CD4-positive, alpha-beta T cell (primary cell): ENCODE measurements at regions of chr15 and their contacts with region 1.

Region 1: DNA sequence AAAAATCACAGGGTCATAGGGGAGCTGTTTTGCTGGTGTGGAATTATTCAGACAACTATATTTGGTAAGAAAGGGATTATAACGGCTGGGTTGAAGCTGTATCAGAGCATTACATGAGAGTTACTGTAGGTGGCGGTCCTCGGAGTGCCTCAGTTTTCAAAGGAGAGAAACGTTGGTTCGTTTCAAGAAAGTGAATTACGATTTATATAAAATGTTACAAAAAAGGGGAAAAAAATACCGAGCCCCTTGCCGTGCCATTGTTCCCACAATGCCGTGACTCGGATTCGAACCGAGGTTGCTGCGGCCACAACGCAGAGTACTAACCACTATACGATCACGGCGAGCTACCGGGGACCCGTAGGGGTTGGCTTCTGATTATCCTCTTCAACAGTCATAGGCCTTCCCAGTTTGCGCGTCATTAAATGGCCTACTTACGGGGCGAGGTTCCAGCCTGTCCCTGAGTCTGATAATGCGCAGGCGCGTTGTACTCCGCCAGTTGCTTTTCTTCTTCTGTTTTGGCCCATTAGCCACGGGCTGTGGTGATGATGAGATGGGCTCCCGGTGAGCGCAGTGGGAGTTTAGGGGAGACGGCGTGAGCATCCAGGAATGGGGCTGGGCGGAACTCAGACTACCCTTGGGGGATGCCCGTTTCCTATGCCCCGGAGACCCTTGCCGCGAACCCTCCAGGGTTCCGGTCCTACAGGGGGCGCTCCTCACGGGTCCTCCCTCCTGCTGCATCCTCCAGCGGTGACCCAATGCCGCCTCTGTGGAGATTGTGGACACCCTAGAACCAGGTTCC is 10.8 kb upstream of the SHF start:
- DNase-seq: peak; percentile 84 to 99 (median 94)
- ATAC-seq: peak; percentile 61
- H3K4me3 ChIP-seq: peak overlapping the region; percentile 88
- H3K4me3 Mint-ChIP-seq: no peak overlapping the region
- H3K27ac ChIP-seq: peak overlapping the region; percentile 91 to 94
- H3K27ac Mint-ChIP-seq: no peak overlapping the region
- H3K4me1 ChIP-seq: peaks cover 36% of the 10 kb centered on the region
- H3K4me1 Mint-ChIP-seq: no peaks in the 10 kb centered on the region
- H3K27me3 ChIP-seq: no peaks in the 10 kb centered on the region
- H3K27me3 Mint-ChIP-seq: peaks cover 16% of the 10 kb centered on the region
- CTCF ChIP-seq: peak; percentile 46

Region 2: DNA sequence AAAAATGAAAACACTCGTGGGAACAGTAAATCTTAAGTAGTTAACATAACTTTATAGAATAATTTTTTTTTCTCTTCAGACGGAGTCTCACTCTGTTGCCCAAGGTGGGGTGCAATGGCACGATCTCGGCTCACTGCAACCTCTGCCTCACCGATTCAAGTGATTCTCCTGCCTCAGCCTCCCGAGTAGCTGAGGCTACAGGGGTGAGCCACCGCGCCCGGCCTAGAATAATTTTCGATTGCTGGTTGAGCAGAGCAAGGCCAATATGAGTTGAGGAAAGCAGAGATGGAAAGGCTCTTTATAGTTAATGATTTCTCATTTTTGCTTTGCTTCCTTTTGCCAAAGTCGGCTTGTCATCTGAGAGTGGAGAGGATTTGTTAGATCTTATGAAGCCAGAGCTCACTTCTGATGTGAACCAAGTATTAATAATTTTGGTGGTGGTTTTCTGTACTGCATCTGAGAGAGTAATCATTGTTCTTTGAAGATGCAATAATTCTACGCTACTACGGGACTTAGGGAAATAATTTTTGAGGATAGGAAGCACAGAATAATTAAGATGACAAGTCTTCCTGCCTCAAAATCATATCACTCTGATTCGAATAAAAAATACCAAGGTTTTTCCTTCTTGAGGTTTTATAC is 911.6 kb before region 1 on chr15:
- CTCF ChIA-PET with region 1: no interaction called
- POLR2A ChIA-PET with region 1: interaction called, 4 read pairs
- intact Hi-C with region 1: loop called in 1 of 2 experiments (anchors 10 kb)
- DNase-seq: peak in 2 of 14 experiments; percentile 23 to 32
- ATAC-seq: no peak
- H3K4me3 ChIP-seq: peak overlapping the region; percentile 78
- H3K4me3 Mint-ChIP-seq: peak overlapping the region; percentile 98
- H3K27ac ChIP-seq: peak overlapping the region; percentile 95
- H3K27ac Mint-ChIP-seq: peak overlapping the region; percentile 99
- H3K4me1 ChIP-seq: peaks cover 16% of the 10 kb centered on the region
- H3K4me1 Mint-ChIP-seq: peaks cover 51% of the 10 kb centered on the region
- H3K27me3 ChIP-seq: no peaks in the 10 kb centered on the region
- H3K27me3 Mint-ChIP-seq: peaks cover 8% of the 10 kb centered on the region
- CTCF ChIP-seq: peak; percentile 27

Region 3: GRCh38 chr15:44482088-44482487 is 716.4 kb before region 1 on chr15:
- CTCF ChIA-PET with region 1: no interaction called
- POLR2A ChIA-PET with region 1: no interaction called
- intact Hi-C with region 1: no loop called
- DNase-seq: no peak
- ATAC-seq: no peak
- H3K4me3 ChIP-seq: no peak overlapping the region
- H3K4me3 Mint-ChIP-seq: no peak overlapping the region
- H3K27ac ChIP-seq: no peak overlapping the region
- H3K27ac Mint-ChIP-seq: peak overlapping the region; percentile 2
- H3K4me1 ChIP-seq: peaks cover 3% of the 10 kb centered on the region
- H3K4me1 Mint-ChIP-seq: peaks cover 25% of the 10 kb centered on the region
- H3K27me3 ChIP-seq: no peaks in the 10 kb centered on the region
- H3K27me3 Mint-ChIP-seq: no peaks in the 10 kb centered on the region
- CTCF ChIP-seq: no peak

Region 4: DNA sequence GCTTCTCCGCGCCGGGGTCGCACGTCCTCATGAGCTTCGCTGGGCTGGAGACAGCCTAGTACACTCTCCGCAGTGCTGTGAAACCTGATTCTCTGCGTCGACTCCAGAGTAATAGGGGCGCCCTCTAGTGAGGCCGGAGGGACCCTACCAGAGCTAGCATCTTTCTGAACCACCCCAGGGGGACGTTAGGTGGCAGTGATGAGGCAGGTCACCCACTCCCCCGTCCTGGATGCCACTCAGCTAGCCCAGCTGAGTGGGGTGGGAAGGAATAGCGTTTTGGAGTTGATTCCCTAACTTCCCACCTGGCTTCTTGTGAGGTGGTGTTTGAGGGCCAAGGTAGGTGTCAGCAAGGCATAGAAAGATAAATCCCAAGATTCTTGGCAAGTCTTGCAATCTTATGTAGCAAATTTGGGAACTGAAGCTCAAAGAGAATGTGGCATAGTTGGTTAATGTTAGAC is 80.4 kb before region 1 on chr15:
- CTCF ChIA-PET with region 1: interaction called, 13 read pairs
- POLR2A ChIA-PET with region 1: interaction called, 10 read pairs
- intact Hi-C with region 1: loop called in 1 of 2 experiments (anchors 5 kb)
- DNase-seq: peak; percentile 70 to 91 (median 80)
- ATAC-seq: peak; percentile 99
- H3K4me3 ChIP-seq: peak overlapping the region; percentile 29
- H3K4me3 Mint-ChIP-seq: peak overlapping the region; percentile 88
- H3K27ac ChIP-seq: no peak overlapping the region
- H3K27ac Mint-ChIP-seq: no peak overlapping the region
- H3K4me1 ChIP-seq: peaks cover 39% of the 10 kb centered on the region
- H3K4me1 Mint-ChIP-seq: peaks cover 43% of the 10 kb centered on the region
- H3K27me3 ChIP-seq: peaks cover 58 to 59% of the 10 kb centered on the region in 2 experiments
- H3K27me3 Mint-ChIP-seq: peaks cover 80% of the 10 kb centered on the region
- CTCF ChIP-seq: peak; percentile 100

Region 5: GRCh38 chr15:45179221-45179985 is 19.1 kb before region 1 on chr15:
- CTCF ChIA-PET with region 1: interaction called, 5 read pairs
- POLR2A ChIA-PET with region 1: interaction called, 129 read pairs
- intact Hi-C with region 1: no loop called
- DNase-seq: peak in 11 of 14 experiments; percentile 31 to 79 (median 50)
- ATAC-seq: peak; percentile 51
- H3K4me3 ChIP-seq: no peak overlapping the region
- H3K4me3 Mint-ChIP-seq: no peak overlapping the region
- H3K27ac ChIP-seq: no peak overlapping the region
- H3K27ac Mint-ChIP-seq: no peak overlapping the region
- H3K4me1 ChIP-seq: peaks cover 15% of the 10 kb centered on the region
- H3K4me1 Mint-ChIP-seq: peaks cover 7% of the 10 kb centered on the region
- H3K27me3 ChIP-seq: no peaks in the 10 kb centered on the region
- H3K27me3 Mint-ChIP-seq: no peaks in the 10 kb centered on the region
- CTCF ChIP-seq: peak; percentile 42

Region 6: DNA sequence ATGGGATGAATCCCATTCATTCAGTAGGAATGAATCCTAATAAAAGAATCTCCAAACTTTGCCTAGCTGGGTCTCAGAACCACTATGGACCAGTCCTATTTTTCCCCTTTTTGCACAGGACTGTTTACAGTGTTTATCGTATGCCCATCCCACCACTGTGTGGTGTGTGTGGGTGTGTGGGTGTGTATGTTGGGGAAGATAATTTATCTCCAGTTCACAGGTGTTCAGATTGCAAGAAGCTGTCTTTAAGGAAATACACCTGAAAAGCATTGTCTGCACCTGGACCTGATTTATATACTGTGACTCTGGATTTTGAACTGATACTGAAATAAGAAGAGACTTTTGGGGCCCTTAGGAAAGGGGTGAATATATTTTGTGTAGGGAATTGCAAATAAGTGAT is 14.0 kb after region 1 on chr15:
- CTCF ChIA-PET with region 1: no interaction called
- POLR2A ChIA-PET with region 1: interaction called, 10 read pairs
- intact Hi-C with region 1: no loop called
- DNase-seq: no peak
- ATAC-seq: no peak
- H3K4me3 ChIP-seq: no peak overlapping the region
- H3K4me3 Mint-ChIP-seq: no peak overlapping the region
- H3K27ac ChIP-seq: no peak overlapping the region
- H3K27ac Mint-ChIP-seq: no peak overlapping the region
- H3K4me1 ChIP-seq: no peaks in the 10 kb centered on the region
- H3K4me1 Mint-ChIP-seq: no peaks in the 10 kb centered on the region
- H3K27me3 ChIP-seq: no peaks in the 10 kb centered on the region
- H3K27me3 Mint-ChIP-seq: peaks cover 11% of the 10 kb centered on the region
- CTCF ChIP-seq: no peak

Region 7: DNA sequence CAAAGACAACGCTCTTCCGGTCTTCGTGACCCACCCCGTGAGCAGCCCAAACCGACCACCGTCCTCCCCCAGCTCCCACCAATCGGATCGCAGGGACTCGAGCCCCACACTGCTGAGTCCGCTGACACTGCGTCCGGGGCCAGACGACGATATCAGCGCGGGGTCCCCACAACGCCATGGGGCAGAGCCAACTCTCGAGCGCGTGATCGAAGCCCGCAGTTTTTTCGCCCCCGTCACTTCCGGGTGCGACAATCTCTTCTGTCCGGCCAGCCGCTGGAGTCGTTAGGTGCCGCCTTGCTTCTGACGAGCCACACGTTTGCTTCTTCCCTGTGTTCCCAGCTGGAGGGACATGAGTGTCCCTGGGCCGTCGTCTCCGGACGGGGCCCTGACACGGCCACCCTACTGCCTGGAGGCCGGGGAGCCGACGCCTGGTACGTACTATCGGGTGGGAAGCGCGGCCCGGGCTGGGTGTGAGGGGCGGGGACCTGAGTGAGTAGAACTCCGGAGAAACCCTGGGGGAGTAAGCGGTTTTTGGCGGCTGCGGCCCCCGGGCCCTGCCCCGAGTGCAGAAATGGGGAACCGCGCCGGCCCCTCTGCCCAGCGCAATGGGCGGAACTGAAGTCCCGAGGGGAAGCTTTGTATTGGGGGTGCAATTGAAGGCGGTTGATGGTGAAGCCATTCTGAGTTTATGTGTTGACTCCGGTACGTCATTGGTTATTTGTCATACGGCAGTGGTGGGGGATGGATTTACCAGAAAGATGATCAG is 388.7 kb after region 1 on chr15 and contains the start of gene BLOC1S6:
- CTCF ChIA-PET with region 1: no interaction called
- POLR2A ChIA-PET with region 1: interaction called, 15 read pairs
- intact Hi-C with region 1: no loop called
- DNase-seq: peak; percentile 78 to 95 (median 85)
- ATAC-seq: peak; percentile 78
- H3K4me3 ChIP-seq: peak within 1 kb of the TSS; percentile 94
- H3K4me3 Mint-ChIP-seq: peak within 1 kb of the TSS; percentile 99
- H3K27ac ChIP-seq: peak within 1 kb of the TSS; percentile 95 to 99
- H3K27ac Mint-ChIP-seq: peak within 1 kb of the TSS; percentile 100
- H3K4me1 ChIP-seq: peaks cover 21% of the 10 kb centered on the region
- H3K4me1 Mint-ChIP-seq: peaks cover 43% of the 10 kb centered on the region
- H3K27me3 ChIP-seq: no peaks in the 10 kb centered on the region
- H3K27me3 Mint-ChIP-seq: no peaks in the 10 kb centered on the region
- CTCF ChIP-seq: no peak
- total RNA-seq, gene BLOC1S6: 68.5 TPM